Natural killer cell (primary cell): ENCODE measurements at regions of chr9 and their contacts with region 1.

Region 1: DNA sequence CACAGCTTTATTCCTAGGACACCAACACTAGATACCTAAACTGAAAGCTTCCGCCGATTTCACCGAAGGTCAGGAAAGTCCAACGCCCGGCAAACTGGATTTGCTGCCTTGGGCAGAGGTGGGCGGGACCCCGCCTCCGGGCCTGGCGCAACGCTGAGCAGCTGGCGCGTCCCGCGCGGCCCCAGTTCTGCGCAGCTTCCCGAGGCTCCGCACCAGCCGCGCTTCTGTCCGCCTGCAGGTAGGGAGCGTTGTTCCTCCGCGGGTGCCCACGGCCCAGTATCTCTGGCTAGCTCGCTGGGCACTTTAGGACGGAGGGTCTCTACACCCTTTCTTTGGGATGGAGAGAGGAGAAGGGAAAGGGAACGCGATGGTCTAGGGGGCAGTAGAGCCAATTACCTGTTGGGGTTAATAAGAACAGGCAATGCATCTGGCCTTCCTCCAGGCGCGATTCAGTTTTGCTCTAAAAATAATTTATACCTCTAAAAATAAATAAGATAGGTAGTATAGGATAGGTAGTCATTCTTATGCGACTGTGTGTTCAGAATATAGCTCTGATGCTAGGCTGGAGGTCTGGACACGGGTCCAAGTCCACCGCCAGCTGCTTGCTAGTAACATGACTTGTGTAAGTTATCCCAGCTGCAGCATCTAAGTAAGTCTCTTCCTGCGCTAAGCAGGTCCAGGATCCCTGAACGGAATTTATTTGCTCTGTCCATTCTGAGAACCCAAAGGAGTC is at the start of gene CD274:
- DNase-seq: peak; percentile 73 to 90
- ATAC-seq: peak; percentile 96 to 97 (median 96)
- H3K4me3 ChIP-seq: peak within 1 kb of the TSS; percentile 67
- H3K4me3 Mint-ChIP-seq: peak within 1 kb of the TSS; percentile 96
- H3K27ac ChIP-seq: peak within 1 kb of the TSS; percentile 92
- H3K27ac Mint-ChIP-seq: peak within 1 kb of the TSS; percentile 94 to 98
- H3K4me1 ChIP-seq: peaks cover 15% of the 10 kb centered on the region
- H3K4me1 Mint-ChIP-seq: peaks cover 29 to 34% of the 10 kb centered on the region in 2 donors
- H3K27me3 ChIP-seq: no peaks in the 10 kb centered on the region
- H3K27me3 Mint-ChIP-seq: peaks cover 0 to 4% of the 10 kb centered on the region in 2 donors
- CTCF ChIP-seq: peak; percentile 45
- total RNA-seq, gene CD274: 4.9 to 7.2 (median 6.0) TPM

Region 2: DNA sequence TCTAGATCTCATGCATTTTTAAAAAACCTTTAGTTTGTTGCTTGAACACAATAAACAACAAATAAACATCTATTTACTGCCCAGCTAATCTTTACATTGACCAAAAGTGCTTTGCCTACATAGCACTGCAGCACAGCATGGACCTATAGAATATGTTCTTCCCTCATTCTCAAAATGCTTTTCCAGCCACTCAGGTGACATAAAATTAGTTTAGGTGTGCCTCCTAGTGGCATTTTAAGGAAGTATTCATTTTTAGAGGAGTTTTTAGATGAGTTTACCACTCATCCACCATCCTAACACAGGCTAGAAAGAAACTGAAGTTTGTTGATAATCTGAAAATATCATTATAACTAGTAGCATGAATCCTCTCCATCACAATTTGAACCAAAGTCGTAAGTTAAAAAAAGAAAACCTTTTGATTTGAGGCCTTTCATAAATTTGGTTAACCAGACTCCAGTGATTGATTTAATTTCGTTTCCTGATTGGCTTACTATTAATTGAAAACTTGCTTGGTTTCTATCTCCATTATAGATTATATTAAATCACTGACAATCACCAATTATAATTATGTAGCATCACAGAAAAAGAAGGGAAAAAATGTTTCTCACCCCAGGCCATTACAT is 25.4 kb before region 1 on chr9:
- intact Hi-C with region 1: no loop called
- DNase-seq: peak in 1 of 2 donors; percentile 68
- ATAC-seq: peak; percentile 44 to 66 (median 59)
- H3K4me3 ChIP-seq: no peak overlapping the region
- H3K4me3 Mint-ChIP-seq: no peak overlapping the region
- H3K27ac ChIP-seq: no peak overlapping the region
- H3K27ac Mint-ChIP-seq: no peak overlapping the region
- H3K4me1 ChIP-seq: no peaks in the 10 kb centered on the region
- H3K4me1 Mint-ChIP-seq: peaks cover 7 to 14% of the 10 kb centered on the region in 2 donors
- H3K27me3 ChIP-seq: no peaks in the 10 kb centered on the region
- H3K27me3 Mint-ChIP-seq: no peaks in the 10 kb centered on the region
- CTCF ChIP-seq: peak; percentile 74

Region 3: DNA sequence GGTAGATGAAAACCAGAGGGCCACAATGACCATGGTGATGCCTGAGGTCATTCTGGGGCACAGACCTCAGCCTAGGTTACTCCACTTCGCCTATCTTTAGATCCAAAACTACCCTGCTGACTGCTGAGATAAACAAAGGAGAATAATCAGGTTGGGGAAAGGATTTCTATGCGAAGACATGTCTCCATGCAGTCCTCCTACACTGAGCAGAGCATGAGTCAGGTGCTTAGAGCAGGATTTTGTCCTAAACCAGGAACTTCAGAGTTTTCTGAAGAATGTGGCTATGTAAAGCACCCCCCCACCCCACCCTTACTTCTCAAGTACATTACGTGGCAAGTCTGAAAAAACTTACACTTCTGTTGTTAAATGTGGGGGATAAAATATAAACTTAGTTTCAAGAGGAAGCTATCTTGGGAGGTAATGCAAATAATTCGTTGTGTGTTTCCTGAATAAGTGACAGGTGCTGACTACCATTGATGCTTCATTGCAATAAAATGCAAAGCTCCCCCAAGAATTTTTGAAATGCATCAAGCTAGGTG is 79.2 kb after region 1 on chr9:
- intact Hi-C with region 1: no loop called
- DNase-seq: no peak
- ATAC-seq: no peak
- H3K4me3 ChIP-seq: no peak overlapping the region
- H3K4me3 Mint-ChIP-seq: no peak overlapping the region
- H3K27ac ChIP-seq: no peak overlapping the region
- H3K27ac Mint-ChIP-seq: no peak overlapping the region
- H3K4me1 ChIP-seq: no peaks in the 10 kb centered on the region
- H3K4me1 Mint-ChIP-seq: peaks cover 9 to 15% of the 10 kb centered on the region in 2 donors
- H3K27me3 ChIP-seq: no peaks in the 10 kb centered on the region
- H3K27me3 Mint-ChIP-seq: peaks cover 0 to 4% of the 10 kb centered on the region in 2 donors
- CTCF ChIP-seq: no peak

Region 4: DNA sequence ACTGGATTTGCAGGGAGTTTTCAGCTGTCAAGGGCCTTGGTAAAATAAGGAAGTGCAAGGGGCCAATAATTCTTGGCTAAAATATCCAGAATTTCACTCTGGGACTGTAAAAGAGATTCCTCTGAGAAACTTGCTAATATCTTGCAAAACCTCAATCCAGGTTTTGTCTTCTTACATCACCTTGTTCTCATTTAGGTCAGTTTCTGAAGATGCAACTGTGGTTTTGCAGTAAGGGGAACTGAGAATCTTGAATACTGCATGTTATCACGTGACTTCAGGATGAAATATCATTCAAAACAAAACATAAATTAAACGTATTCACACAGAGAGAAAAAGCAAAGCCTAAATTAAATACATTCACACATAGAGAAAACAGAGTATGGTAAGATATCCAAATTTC is 143.4 kb after region 1 on chr9:
- intact Hi-C with region 1: loop called (anchors 5 kb)
- DNase-seq: no peak
- ATAC-seq: no peak
- H3K4me3 ChIP-seq: no peak overlapping the region
- H3K4me3 Mint-ChIP-seq: no peak overlapping the region
- H3K27ac ChIP-seq: no peak overlapping the region
- H3K27ac Mint-ChIP-seq: no peak overlapping the region
- H3K4me1 ChIP-seq: no peaks in the 10 kb centered on the region
- H3K4me1 Mint-ChIP-seq: no peaks in the 10 kb centered on the region
- H3K27me3 ChIP-seq: no peaks in the 10 kb centered on the region
- H3K27me3 Mint-ChIP-seq: no peaks in the 10 kb centered on the region
- CTCF ChIP-seq: no peak

Region 5: GRCh38 chr9:5608298-5609225 is 158.0 kb after region 1 on chr9:
- intact Hi-C with region 1: no loop called
- DNase-seq: peak in 1 of 2 donors; percentile 22
- ATAC-seq: peak; percentile 27 to 53 (median 52)
- H3K4me3 ChIP-seq: peak overlapping the region; percentile 3
- H3K4me3 Mint-ChIP-seq: peak overlapping the region; percentile 73
- H3K27ac ChIP-seq: no peak overlapping the region
- H3K27ac Mint-ChIP-seq: peak overlapping the region in 1 of 2 donors; percentile 79
- H3K4me1 ChIP-seq: peaks cover 3% of the 10 kb centered on the region
- H3K4me1 Mint-ChIP-seq: peaks cover 11 to 12% of the 10 kb centered on the region in 2 donors
- H3K27me3 ChIP-seq: no peaks in the 10 kb centered on the region
- H3K27me3 Mint-ChIP-seq: no peaks in the 10 kb centered on the region
- CTCF ChIP-seq: no peak